ENCODE measurements at regions of chr7 and their contacts with region 1.

Region 1: GRCh38 chr7:24917510-24918239 is 62.3 kb downstream of the OSBPL3 start:
- DNase-seq: no peak
- ATAC-seq: peak; percentile 66
- H3K4me3 ChIP-seq: peak overlapping the region; percentile 9; the same call in 1 of the 2 replicates
- H3K27ac ChIP-seq: peak overlapping the region; percentile 13
- H3K4me1 ChIP-seq: peaks cover 69% of the 10 kb centered on the region
- H3K27me3 ChIP-seq: no peaks in the 10 kb centered on the region
- CTCF ChIP-seq: no peak
- EP300 ChIP-seq: no peak
- POLR2A ChIP-seq: no peak
- RAD21 ChIP-seq: no peak

Region 2: GRCh38 chr7:24800667-24801066 is 117.0 kb before region 1 on chr7:
- CTCF ChIA-PET with region 1: no interaction called
- POLR2A ChIA-PET with region 1: no interaction called
- RAD21 ChIA-PET with region 1: no interaction called
- SMC1A ChIA-PET with region 1: no interaction called
- in situ Hi-C with region 1: no loop called
- intact Hi-C with region 1: no loop called
- DNase-seq: no peak
- ATAC-seq: no peak
- H3K4me3 ChIP-seq: no peak overlapping the region
- H3K27ac ChIP-seq: no peak overlapping the region
- H3K4me1 ChIP-seq: no peaks in the 10 kb centered on the region
- H3K27me3 ChIP-seq: no peaks in the 10 kb centered on the region
- CTCF ChIP-seq: no peak
- EP300 ChIP-seq: no peak
- POLR2A ChIP-seq: no peak
- RAD21 ChIP-seq: no peak

Region 3: GRCh38 chr7:24936121-24936824 is 18.6 kb after region 1 on chr7:
- CTCF ChIA-PET with region 1: interaction called, 4 read pairs
- POLR2A ChIA-PET with region 1: interaction called, 6 read pairs
- RAD21 ChIA-PET with region 1: no interaction called
- SMC1A ChIA-PET with region 1: interaction called, 27 read pairs
- in situ Hi-C with region 1: no loop called
- intact Hi-C with region 1: no loop called
- DNase-seq: peak; percentile 34
- ATAC-seq: peak; percentile 76
- H3K4me3 ChIP-seq: peak overlapping the region; percentile 52; the same call in 1 of the 2 replicates
- H3K27ac ChIP-seq: peak overlapping the region; percentile 35
- H3K4me1 ChIP-seq: peaks cover 40% of the 10 kb centered on the region
- H3K27me3 ChIP-seq: no peaks in the 10 kb centered on the region
- CTCF ChIP-seq: no peak
- EP300 ChIP-seq: no peak
- POLR2A ChIP-seq: no peak
- RAD21 ChIP-seq: no peak